ENCODE measurements at regions of chr4 and their contacts with region 1.

Region 1: GRCh38 chr4:141826260-141826659 is 189.9 kb downstream of the IL15 start:
- DNase-seq: peak; percentile 45
- H3K4me3 ChIP-seq: no peak overlapping the region
- H3K27ac ChIP-seq: peak overlapping the region; percentile 68
- H3K4me1 ChIP-seq: peaks cover 19% of the 10 kb centered on the region
- H3K27me3 ChIP-seq: no peaks in the 10 kb centered on the region
- CTCF ChIP-seq: no peak
- POLR2A ChIP-seq: no peak

Region 2: GRCh38 chr4:141768954-141769353 is 57.3 kb before region 1 on chr4:
- CTCF ChIA-PET with region 1: interaction called, 8 read pairs
- POLR2A ChIA-PET with region 1: no interaction called
- dilution Hi-C with region 1: no loop called
- intact Hi-C with region 1: loop called (anchors 1 kb)
- DNase-seq: peak; percentile 93
- H3K4me3 ChIP-seq: no peak overlapping the region
- H3K27ac ChIP-seq: peak overlapping the region; percentile 87
- H3K4me1 ChIP-seq: peaks cover 13% of the 10 kb centered on the region
- H3K27me3 ChIP-seq: no peaks in the 10 kb centered on the region
- CTCF ChIP-seq: no peak
- POLR2A ChIP-seq: no peak

Region 3: GRCh38 chr4:141853091-141853764 is 27.0 kb after region 1 on chr4:
- CTCF ChIA-PET with region 1: no interaction called
- POLR2A ChIA-PET with region 1: no interaction called
- dilution Hi-C with region 1: no loop called
- intact Hi-C with region 1: loop called (anchors 1 kb)
- DNase-seq: no peak
- H3K4me3 ChIP-seq: no peak overlapping the region
- H3K27ac ChIP-seq: no peak overlapping the region
- H3K4me1 ChIP-seq: no peaks in the 10 kb centered on the region
- H3K27me3 ChIP-seq: no peaks in the 10 kb centered on the region
- CTCF ChIP-seq: no peak
- POLR2A ChIP-seq: no peak

Region 4: DNA sequence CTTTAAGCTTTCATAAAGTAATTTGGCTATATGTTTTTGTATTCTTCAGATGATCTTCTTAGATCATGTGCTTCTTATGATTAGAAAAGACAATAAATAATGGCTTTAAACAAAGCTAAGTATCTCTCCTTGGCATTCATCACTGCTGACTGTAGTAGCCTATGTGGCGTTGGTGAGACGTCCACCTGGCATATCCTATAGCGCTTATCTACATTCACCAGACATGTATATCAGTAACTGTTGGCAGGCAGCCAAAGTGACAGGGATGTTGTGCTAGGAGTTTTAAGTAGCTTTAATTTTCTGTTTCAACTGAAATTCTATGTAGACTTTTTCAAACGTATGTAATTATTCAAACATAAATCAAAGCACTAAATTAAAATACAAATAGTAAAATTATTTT is 86.6 kb after region 1 on chr4:
- CTCF ChIA-PET with region 1: no interaction called
- POLR2A ChIA-PET with region 1: no interaction called
- dilution Hi-C with region 1: no loop called
- intact Hi-C with region 1: loop called (anchors 2 kb)
- DNase-seq: peak; percentile 97
- H3K4me3 ChIP-seq: no peak overlapping the region
- H3K27ac ChIP-seq: peak overlapping the region; percentile 44
- H3K4me1 ChIP-seq: peaks cover 11% of the 10 kb centered on the region
- H3K27me3 ChIP-seq: no peaks in the 10 kb centered on the region
- CTCF ChIP-seq: no peak
- POLR2A ChIP-seq: no peak

Region 5: DNA sequence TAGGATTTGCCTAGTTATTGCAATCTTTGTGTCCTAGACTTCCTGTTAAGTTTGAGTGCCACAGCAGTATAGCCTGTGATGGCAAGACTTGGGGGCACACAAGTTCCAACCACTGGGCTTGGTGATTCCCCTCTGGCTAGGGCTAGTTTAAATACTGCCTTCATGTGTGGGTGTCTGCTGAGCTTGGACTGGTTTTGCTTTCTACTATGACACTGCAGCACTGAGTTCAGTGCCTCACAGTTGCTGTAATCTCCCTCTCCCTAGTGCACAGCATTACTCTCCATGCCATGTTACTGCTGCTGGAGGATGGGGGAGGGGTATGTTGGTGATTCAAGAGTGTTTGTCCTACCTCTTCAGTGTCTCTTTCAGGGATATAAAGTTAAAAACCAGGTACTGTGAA is 189.8 kb after region 1 on chr4:
- CTCF ChIA-PET with region 1: no interaction called
- POLR2A ChIA-PET with region 1: no interaction called
- dilution Hi-C with region 1: no loop called
- intact Hi-C with region 1: loop called (anchors 10 kb)
- DNase-seq: no peak
- H3K4me3 ChIP-seq: no peak overlapping the region
- H3K27ac ChIP-seq: no peak overlapping the region
- H3K4me1 ChIP-seq: peaks cover 7% of the 10 kb centered on the region
- H3K27me3 ChIP-seq: no peaks in the 10 kb centered on the region
- CTCF ChIP-seq: no peak
- POLR2A ChIP-seq: no peak